ENCODE measurements at regions of chr22 and their contacts with region 1.

Region 1: GRCh38 chr22:43591380-43591779 is 179.6 kb downstream of the MPPED1 start:
- DNase-seq: no peak

Region 2: GRCh38 chr22:43572710-43573109 is 18.7 kb before region 1 on chr22:
- intact Hi-C with region 1: loop called in 1 of 2 experiments (anchors 1 kb)
- DNase-seq: no peak

Measured in posterior vena cava (tissue), 2 donors.